Left cardiac atrium (tissue), 4 donors: ENCODE measurements at regions of chr1 and their contacts with region 1.

Region 1: GRCh38 chr1:224513787-224514209 is 79.2 kb upstream of the WDR26 start:
- DNase-seq: peak; percentile 84
- ATAC-seq: peak; percentile 86 to 95

Region 2: DNA sequence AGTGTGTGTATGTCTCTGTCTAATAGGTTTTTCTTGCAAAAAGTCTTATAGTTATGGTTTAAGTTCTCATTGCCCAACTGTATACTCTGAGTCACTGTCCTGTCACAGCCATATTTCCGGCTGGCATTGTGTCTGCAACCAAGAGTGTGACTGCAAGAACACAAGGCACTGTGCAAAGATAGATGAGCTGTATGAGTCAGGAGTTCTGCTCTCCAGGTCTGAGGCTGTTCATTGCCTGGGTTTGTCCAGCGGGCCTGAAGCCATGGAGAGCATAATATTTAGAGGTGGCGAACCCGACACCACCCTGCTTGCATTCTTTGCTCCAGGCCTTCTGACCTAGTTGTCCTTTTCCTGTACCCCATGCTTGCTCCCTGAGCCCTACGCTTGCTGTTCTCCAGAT is 51.4 kb after region 1 on chr1:
- intact Hi-C with region 1: no loop called
- DNase-seq: no peak
- ATAC-seq: peak in 1 of 2 donors; percentile 40

Region 3: GRCh38 chr1:224644553-224645154 is 130.9 kb after region 1 on chr1:
- intact Hi-C with region 1: loop called in 1 of 2 experiments (anchors 10 kb)
- DNase-seq: no peak
- ATAC-seq: peak; percentile 61 to 66

Region 4: GRCh38 chr1:224851210-224851847 is 337.5 kb after region 1 on chr1:
- intact Hi-C with region 1: loop called (anchors 2 kb)
- DNase-seq: peak; percentile 52
- ATAC-seq: peak; percentile 61 to 71

Region 5: GRCh38 chr1:224879162-224879803 is 365.5 kb after region 1 on chr1:
- intact Hi-C with region 1: no loop called
- DNase-seq: no peak
- ATAC-seq: peak in 1 of 2 donors; percentile 79

Region 6: GRCh38 chr1:224922404-224923164 is 408.8 kb after region 1 on chr1:
- intact Hi-C with region 1: loop called (anchors 2 to 10 kb)
- DNase-seq: no peak
- ATAC-seq: peak; percentile 61 to 65